Tibial artery (tissue), 4 donors: ENCODE measurements at regions of chr17 and their contacts with region 1.

Region 1: GRCh38 chr17:82450170-82451106 is at the start of gene CYBC1:
- DNase-seq: peak; percentile 89 to 96
- H3K4me3 ChIP-seq: peak within 1 kb of the TSS; percentile 82 to 94
- H3K27ac ChIP-seq: peak within 1 kb of the TSS; percentile 87 to 90
- H3K4me1 ChIP-seq: peaks cover 0 to 28% (median 22%) of the 10 kb centered on the region in 4 donors
- H3K27me3 ChIP-seq: no peaks in the 10 kb centered on the region
- CTCF ChIP-seq: no peak

Region 2: GRCh38 chr17:82418001-82418986 is 32.1 kb before region 1 on chr17 and contains the starts of genes HEXD and OGFOD3:
- intact Hi-C with region 1: no loop called
- DNase-seq: peak; percentile 69 to 90
- H3K4me3 ChIP-seq: peak within 1 kb of the TSS; percentile 58 to 77
- H3K27ac ChIP-seq: peak within 1 kb of the TSS; percentile 84 to 85
- H3K4me1 ChIP-seq: peaks cover 0 to 24% (median 16%) of the 10 kb centered on the region in 4 donors
- H3K27me3 ChIP-seq: no peaks in the 10 kb centered on the region
- CTCF ChIP-seq: peak in 1 of 2 experiments; percentile 22

Region 3: DNA sequence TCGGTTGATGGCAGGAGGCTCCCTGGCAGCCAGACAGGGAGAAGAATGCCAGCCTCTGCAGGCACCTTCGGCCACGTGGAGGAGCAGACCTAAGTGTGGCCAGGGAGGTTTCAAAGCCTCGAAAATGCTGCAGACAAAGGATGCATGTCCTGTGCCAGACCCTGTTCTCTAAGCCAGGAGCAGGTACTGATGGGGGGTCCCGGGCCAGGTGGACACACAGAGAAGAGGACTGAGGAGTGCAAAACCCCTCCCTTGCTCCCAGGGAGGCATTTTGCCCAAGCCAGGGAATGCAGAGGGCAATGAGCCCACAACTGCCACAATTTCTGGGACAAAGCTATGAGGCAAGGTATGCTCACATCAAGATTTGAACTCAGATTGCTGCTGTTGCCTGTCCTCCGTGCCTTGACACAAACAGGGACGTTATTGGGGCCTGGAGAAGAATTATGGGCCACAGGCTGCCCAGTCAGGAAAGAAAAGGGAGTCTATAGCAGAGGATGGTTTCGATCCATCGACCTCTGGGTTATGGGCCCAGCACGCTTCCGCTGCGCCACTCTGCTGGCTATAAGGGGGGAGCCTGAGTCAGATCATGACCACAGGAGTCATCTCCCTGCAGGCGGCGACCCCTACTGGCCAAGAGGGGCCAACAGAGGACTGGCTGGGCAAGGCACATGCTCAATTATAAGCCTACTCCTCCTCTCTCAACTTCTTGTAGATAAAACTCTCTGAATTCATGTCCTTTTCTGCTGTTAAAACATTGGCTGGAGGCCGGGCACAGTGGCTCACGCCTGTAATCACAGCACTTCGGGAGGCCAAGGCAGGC is 44.0 kb after region 1 on chr17:
- intact Hi-C with region 1: loop called (anchors 5 kb)
- DNase-seq: peak; percentile 95
- H3K4me3 ChIP-seq: no peak overlapping the region
- H3K27ac ChIP-seq: peak overlapping the region; percentile 93 to 94
- H3K4me1 ChIP-seq: peaks cover 0 to 57% (median 27%) of the 10 kb centered on the region in 4 donors
- H3K27me3 ChIP-seq: no peaks in the 10 kb centered on the region
- CTCF ChIP-seq: peak; percentile 86 to 98

Region 4: GRCh38 chr17:82507631-82508175 is 57.3 kb after region 1 on chr17:
- intact Hi-C with region 1: no loop called
- DNase-seq: no peak
- H3K4me3 ChIP-seq: no peak overlapping the region
- H3K27ac ChIP-seq: no peak overlapping the region
- H3K4me1 ChIP-seq: no peaks in the 10 kb centered on the region
- H3K27me3 ChIP-seq: no peaks in the 10 kb centered on the region
- CTCF ChIP-seq: no peak